CD14-positive monocyte (primary cell): ENCODE measurements at regions of chr9 and their contacts with region 1.

Region 1: GRCh38 chr9:117644133-117644931 is 59.9 kb upstream of the TLR4 start:
- DNase-seq: peak; percentile 69 to 87 (median 70)
- H3K4me3 ChIP-seq: peak overlapping the region in 2 of 3 experiments; percentile 16 to 58
- H3K4me3 Mint-ChIP-seq: peak overlapping the region; percentile 67 to 83
- H3K27ac ChIP-seq: peak overlapping the region in 1 of 2 donors; percentile 37
- H3K27ac Mint-ChIP-seq: peak overlapping the region in 6 of 7 donors; percentile 30 to 85 (median 68)
- H3K4me1 ChIP-seq: peaks cover 23 to 32% of the 10 kb centered on the region in 2 donors
- H3K4me1 Mint-ChIP-seq: peaks cover 28% of the 10 kb centered on the region
- H3K27me3 ChIP-seq: peaks cover 18 to 29% of the 10 kb centered on the region in 2 donors
- H3K27me3 Mint-ChIP-seq: peaks cover 23 to 42% (median 32%) of the 10 kb centered on the region in 3 donors
- CTCF ChIP-seq: peak; percentile 96

Region 2: DNA sequence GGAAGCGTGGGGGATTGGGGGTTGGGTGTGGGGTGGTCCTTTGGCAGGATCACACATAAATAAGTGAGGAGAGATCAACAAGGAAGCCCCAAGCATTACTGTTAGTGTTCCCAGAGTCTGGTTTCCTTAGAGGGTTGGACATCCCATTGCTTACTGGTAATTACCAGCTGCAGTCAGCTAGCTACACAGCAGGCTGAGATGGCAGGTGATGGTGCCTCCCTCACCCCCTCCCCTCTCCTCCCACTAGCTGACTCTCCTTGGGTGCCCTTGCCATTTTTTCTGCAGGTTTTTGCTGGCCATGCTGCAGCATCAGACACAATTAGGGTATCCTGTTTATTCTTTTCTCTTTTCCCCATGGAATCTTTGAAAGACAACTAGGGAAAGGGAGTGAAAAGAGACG is 47.7 kb before region 1 on chr9:
- intact Hi-C with region 1: no loop called
- DNase-seq: no peak
- H3K4me3 ChIP-seq: no peak overlapping the region
- H3K4me3 Mint-ChIP-seq: no peak overlapping the region
- H3K27ac ChIP-seq: no peak overlapping the region
- H3K27ac Mint-ChIP-seq: no peak overlapping the region
- H3K4me1 ChIP-seq: no peaks in the 10 kb centered on the region
- H3K4me1 Mint-ChIP-seq: no peaks in the 10 kb centered on the region
- H3K27me3 ChIP-seq: no peaks in the 10 kb centered on the region
- H3K27me3 Mint-ChIP-seq: peaks cover 0 to 2% (median 0%) of the 10 kb centered on the region in 3 donors
- CTCF ChIP-seq: no peak

Region 3: GRCh38 chr9:117744856-117745389 is 100.6 kb after region 1 on chr9:
- intact Hi-C with region 1: no loop called
- DNase-seq: peak in 2 of 3 donors; percentile 25 to 41
- H3K4me3 ChIP-seq: peak overlapping the region; percentile 28 to 79 (median 41)
- H3K4me3 Mint-ChIP-seq: peak overlapping the region; percentile 82 to 92
- H3K27ac ChIP-seq: no peak overlapping the region
- H3K27ac Mint-ChIP-seq: peak overlapping the region in 3 of 7 donors; percentile 47 to 73 (median 67)
- H3K4me1 ChIP-seq: peaks cover 20% of the 10 kb centered on the region in 2 donors
- H3K4me1 Mint-ChIP-seq: peaks cover 21% of the 10 kb centered on the region
- H3K27me3 ChIP-seq: peaks cover 2 to 3% of the 10 kb centered on the region in 2 donors
- H3K27me3 Mint-ChIP-seq: peaks cover 7 to 13% (median 8%) of the 10 kb centered on the region in 3 donors
- CTCF ChIP-seq: no peak

Region 4: GRCh38 chr9:117777823-117778222 is 133.5 kb after region 1 on chr9:
- intact Hi-C with region 1: loop called (anchors 5 to 10 kb)
- DNase-seq: peak; percentile 26 to 75 (median 37)
- H3K4me3 ChIP-seq: no peak overlapping the region
- H3K4me3 Mint-ChIP-seq: no peak overlapping the region
- H3K27ac ChIP-seq: no peak overlapping the region
- H3K27ac Mint-ChIP-seq: no peak overlapping the region
- H3K4me1 ChIP-seq: peaks cover 27 to 32% of the 10 kb centered on the region in 2 donors
- H3K4me1 Mint-ChIP-seq: peaks cover 39% of the 10 kb centered on the region
- H3K27me3 ChIP-seq: no peaks in the 10 kb centered on the region
- H3K27me3 Mint-ChIP-seq: peaks cover 0 to 3% (median 3%) of the 10 kb centered on the region in 3 donors
- CTCF ChIP-seq: no peak